CD4-positive, alpha-beta T cell (primary cell): ENCODE measurements at regions of chr13 and their contacts with region 1.

Region 1: GRCh38 chr13:54511366-54511765 is 1482.8 kb downstream of the OLFM4 start:
- DNase-seq: no peak
- ATAC-seq: no peak
- H3K4me3 ChIP-seq: no peak overlapping the region
- H3K4me3 Mint-ChIP-seq: no peak overlapping the region
- H3K27ac ChIP-seq: no peak overlapping the region
- H3K27ac Mint-ChIP-seq: no peak overlapping the region
- H3K4me1 ChIP-seq: no peaks in the 10 kb centered on the region
- H3K4me1 Mint-ChIP-seq: no peaks in the 10 kb centered on the region
- H3K27me3 ChIP-seq: no peaks in the 10 kb centered on the region
- H3K27me3 Mint-ChIP-seq: no peaks in the 10 kb centered on the region
- CTCF ChIP-seq: no peak

Region 2: DNA sequence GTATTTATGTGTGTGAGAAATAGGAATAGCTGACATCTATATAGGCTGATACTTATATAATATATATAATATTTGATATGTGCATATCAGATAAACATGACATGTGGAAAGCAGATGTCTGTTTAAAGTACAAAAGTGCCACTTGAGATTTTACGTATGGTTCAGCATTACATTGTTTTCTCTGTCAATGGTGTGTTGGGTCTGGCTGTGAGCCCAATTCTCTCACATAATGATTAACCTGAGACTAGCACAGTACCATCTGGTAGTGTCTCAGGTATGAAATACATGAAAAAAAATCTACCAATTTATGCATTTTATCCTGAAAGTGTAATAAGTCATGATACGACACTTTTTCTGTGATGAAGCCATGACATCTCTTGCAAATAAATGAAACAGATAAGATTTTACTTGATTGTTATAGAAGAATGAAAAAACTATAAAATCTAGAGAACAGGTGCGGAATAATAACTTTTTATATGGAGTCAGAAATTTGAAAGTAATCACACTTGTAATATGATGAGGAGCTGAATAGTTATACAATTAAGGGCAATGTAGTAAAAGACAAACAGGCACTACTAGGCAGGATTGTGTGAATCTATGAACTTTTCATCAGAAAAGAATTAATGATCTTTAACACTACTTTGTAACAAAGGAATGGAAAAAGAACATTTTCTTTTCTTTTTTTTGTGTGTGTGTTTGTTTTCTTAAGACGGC is 77.7 kb before region 1 on chr13:
- CTCF ChIA-PET with region 1: no interaction called
- POLR2A ChIA-PET with region 1: no interaction called
- intact Hi-C with region 1: loop called in 1 of 2 experiments (anchors 2 kb)
- DNase-seq: no peak
- ATAC-seq: no peak
- H3K4me3 ChIP-seq: no peak overlapping the region
- H3K4me3 Mint-ChIP-seq: no peak overlapping the region
- H3K27ac ChIP-seq: no peak overlapping the region
- H3K27ac Mint-ChIP-seq: no peak overlapping the region
- H3K4me1 ChIP-seq: no peaks in the 10 kb centered on the region
- H3K4me1 Mint-ChIP-seq: no peaks in the 10 kb centered on the region
- H3K27me3 ChIP-seq: no peaks in the 10 kb centered on the region
- H3K27me3 Mint-ChIP-seq: no peaks in the 10 kb centered on the region
- CTCF ChIP-seq: no peak